ENCODE measurements at regions of chr4 and their contacts with region 1.

Region 1: GRCh38 chr4:445410-445809 is 53.5 kb downstream of the ZNF721 start:
- DNase-seq: no peak
- H3K4me3 Mint-ChIP-seq: no peak overlapping the region
- H3K27ac Mint-ChIP-seq: no peak overlapping the region
- H3K4me1 Mint-ChIP-seq: no peaks in the 10 kb centered on the region
- H3K27me3 Mint-ChIP-seq: no peaks in the 10 kb centered on the region

Region 2: GRCh38 chr4:242121-242848 is 203.1 kb before region 1 on chr4:
- intact Hi-C with region 1: no loop called
- DNase-seq: peak; percentile 53
- H3K4me3 Mint-ChIP-seq: peak overlapping the region; percentile 70
- H3K27ac Mint-ChIP-seq: peak overlapping the region; percentile 15
- H3K4me1 Mint-ChIP-seq: peaks cover 13% of the 10 kb centered on the region
- H3K27me3 Mint-ChIP-seq: no peaks in the 10 kb centered on the region

Region 3: GRCh38 chr4:373062-373839 is 72.2 kb before region 1 on chr4:
- intact Hi-C with region 1: loop called (anchors 5 kb)
- DNase-seq: no peak
- H3K4me3 Mint-ChIP-seq: no peak overlapping the region
- H3K27ac Mint-ChIP-seq: no peak overlapping the region
- H3K4me1 Mint-ChIP-seq: no peaks in the 10 kb centered on the region
- H3K27me3 Mint-ChIP-seq: no peaks in the 10 kb centered on the region